Activated CD8-positive, alpha-beta T cell treated with anti-CD3 and anti-CD28 coated beads for 36 hours (primary cell): ENCODE measurements at regions of chr7 and their contacts with region 1.

Region 1: GRCh38 chr7:154953006-154953684 is 49.8 kb downstream of the PAXIP1 start:
- DNase-seq: peak; percentile 85
- ATAC-seq: no peak
- H3K4me3 Mint-ChIP-seq: no peak overlapping the region
- H3K27ac Mint-ChIP-seq: no peak overlapping the region
- H3K4me1 Mint-ChIP-seq: no peaks in the 10 kb centered on the region
- H3K27me3 Mint-ChIP-seq: no peaks in the 10 kb centered on the region
- CTCF ChIP-seq: peak; percentile 67

Region 2: GRCh38 chr7:154942691-154943090 is 10.5 kb before region 1 on chr7:
- CTCF ChIA-PET with region 1: interaction called, 39 read pairs
- POLR2A ChIA-PET with region 1: no interaction called
- intact Hi-C with region 1: no loop called
- DNase-seq: no peak
- ATAC-seq: no peak
- H3K4me3 Mint-ChIP-seq: no peak overlapping the region
- H3K27ac Mint-ChIP-seq: no peak overlapping the region
- H3K4me1 Mint-ChIP-seq: peaks cover 5% of the 10 kb centered on the region
- H3K27me3 Mint-ChIP-seq: no peaks in the 10 kb centered on the region
- CTCF ChIP-seq: no peak

Region 3: DNA sequence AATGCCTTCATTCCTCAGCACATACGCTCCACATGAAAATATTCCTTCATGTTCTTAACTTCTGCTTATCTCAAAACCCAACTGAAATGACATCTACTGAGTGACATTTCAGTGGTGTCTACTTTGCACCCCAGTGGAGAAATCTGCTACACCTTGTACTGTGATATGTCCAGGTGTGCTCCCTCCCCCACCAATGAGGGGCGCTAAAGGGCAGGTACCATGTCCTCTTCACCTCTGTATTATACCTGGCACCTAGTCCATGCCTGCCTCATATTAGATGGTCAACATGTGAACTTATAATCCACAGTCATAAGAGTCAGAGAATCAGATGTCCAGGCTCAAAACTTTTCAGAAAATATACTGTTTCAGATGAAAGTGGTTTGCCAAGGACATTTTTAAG is 47.7 kb after region 1 on chr7:
- CTCF ChIA-PET with region 1: interaction called, 10 read pairs
- POLR2A ChIA-PET with region 1: no interaction called
- intact Hi-C with region 1: no loop called
- DNase-seq: peak; percentile 23
- ATAC-seq: no peak
- H3K4me3 Mint-ChIP-seq: no peak overlapping the region
- H3K27ac Mint-ChIP-seq: no peak overlapping the region
- H3K4me1 Mint-ChIP-seq: peaks cover 10% of the 10 kb centered on the region
- H3K27me3 Mint-ChIP-seq: no peaks in the 10 kb centered on the region
- CTCF ChIP-seq: no peak